HEK293 (cell line): ENCODE measurements at regions of chr6 and their contacts with region 1.

Region 1: GRCh38 chr6:66421570-66421969 is 714.5 kb upstream of the EYS start:
- H3K4me3 ChIP-seq: no peak overlapping the region
- H3K27ac ChIP-seq: no peak overlapping the region
- H3K4me1 ChIP-seq: no peaks in the 10 kb centered on the region
- CTCF ChIP-seq: no peak

Region 2: GRCh38 chr6:66065313-66065712 is 356.3 kb before region 1 on chr6:
- CTCF ChIA-PET with region 1: no interaction called
- POLR2A ChIA-PET with region 1: no interaction called
- H3K4me3 ChIP-seq: no peak overlapping the region
- H3K27ac ChIP-seq: no peak overlapping the region
- H3K4me1 ChIP-seq: no peaks in the 10 kb centered on the region
- CTCF ChIP-seq: no peak

Region 3: GRCh38 chr6:66328200-66328599 is 93.4 kb before region 1 on chr6:
- CTCF ChIA-PET with region 1: no interaction called
- POLR2A ChIA-PET with region 1: no interaction called
- H3K4me3 ChIP-seq: no peak overlapping the region
- H3K27ac ChIP-seq: no peak overlapping the region
- H3K4me1 ChIP-seq: no peaks in the 10 kb centered on the region
- CTCF ChIP-seq: no peak

Region 4: GRCh38 chr6:66496659-66497058 is 75.1 kb after region 1 on chr6:
- CTCF ChIA-PET with region 1: interaction called, 17 read pairs
- POLR2A ChIA-PET with region 1: no interaction called
- H3K4me3 ChIP-seq: no peak overlapping the region
- H3K27ac ChIP-seq: no peak overlapping the region
- H3K4me1 ChIP-seq: no peaks in the 10 kb centered on the region
- CTCF ChIP-seq: no peak

Region 5: DNA sequence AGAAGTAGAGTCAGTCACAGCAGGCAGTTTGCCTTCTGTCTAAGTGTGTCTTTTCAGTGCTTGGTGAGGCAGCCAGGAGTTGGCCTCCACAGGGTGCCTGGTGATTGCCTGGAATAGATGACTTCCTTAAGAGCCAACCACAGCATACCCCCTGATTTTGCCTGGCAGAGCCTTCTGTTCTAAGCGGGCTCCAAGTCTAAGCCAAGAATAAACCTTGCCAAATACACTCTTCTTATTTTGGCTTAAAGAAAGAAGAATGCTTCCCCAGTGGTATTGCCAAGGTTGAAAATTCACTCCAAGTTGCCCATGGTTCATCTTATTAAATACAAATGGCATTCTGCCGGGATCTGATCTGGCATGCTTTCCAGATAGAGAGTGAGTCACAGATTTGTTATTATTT is 710.3 kb after region 1 on chr6:
- CTCF ChIA-PET with region 1: no interaction called
- POLR2A ChIA-PET with region 1: no interaction called
- H3K4me3 ChIP-seq: no peak overlapping the region
- H3K27ac ChIP-seq: no peak overlapping the region
- H3K4me1 ChIP-seq: no peaks in the 10 kb centered on the region
- CTCF ChIP-seq: no peak